PC-3 (cell line): ENCODE measurements at regions of chr21 and their contacts with region 1.

Region 1: GRCh38 chr21:46569081-46569480 is 35.8 kb downstream of the S100B start:
- DNase-seq: no peak
- ATAC-seq: no peak
- H3K4me3 ChIP-seq: no peak overlapping the region
- H3K27ac ChIP-seq: no peak overlapping the region
- H3K4me1 ChIP-seq: no peaks in the 10 kb centered on the region; the same call in 1 of the 2 replicates
- H3K27me3 ChIP-seq: no peaks in the 10 kb centered on the region
- CTCF ChIP-seq: no peak

Region 2: GRCh38 chr21:45236481-45236880 is 1332.6 kb before region 1 on chr21:
- CTCF ChIA-PET with region 1: no interaction called
- POLR2A ChIA-PET with region 1: no interaction called
- intact Hi-C with region 1: no loop called
- DNase-seq: peak; percentile 19
- ATAC-seq: peak; percentile 64
- H3K4me3 ChIP-seq: no peak overlapping the region
- H3K27ac ChIP-seq: no peak overlapping the region
- H3K4me1 ChIP-seq: no peaks in the 10 kb centered on the region
- H3K27me3 ChIP-seq: no peaks in the 10 kb centered on the region
- CTCF ChIP-seq: peak; percentile 22; the same call in 1 of the 2 replicates

Region 3: DNA sequence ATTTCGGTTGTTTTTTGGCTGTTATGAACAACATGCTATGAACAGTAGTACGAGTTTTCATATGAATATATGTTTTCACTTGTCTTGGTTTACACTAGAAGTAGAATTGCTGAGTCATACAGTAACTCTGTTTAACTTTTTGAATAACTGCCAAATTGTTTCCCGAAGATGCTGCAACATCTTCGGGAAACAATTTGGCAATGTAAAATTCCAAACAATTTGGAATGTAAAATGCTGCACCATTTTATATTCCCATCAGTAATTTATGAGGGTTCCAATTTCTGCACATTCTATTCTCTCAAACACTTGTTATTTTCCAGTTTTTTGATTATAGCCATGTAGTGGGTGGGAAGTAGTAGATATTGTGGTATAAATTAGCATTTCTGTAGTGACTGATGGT is 914.0 kb before region 1 on chr21:
- CTCF ChIA-PET with region 1: no interaction called
- POLR2A ChIA-PET with region 1: interaction called, 19 read pairs
- intact Hi-C with region 1: no loop called
- DNase-seq: peak; percentile 55
- ATAC-seq: no peak
- H3K4me3 ChIP-seq: no peak overlapping the region
- H3K27ac ChIP-seq: no peak overlapping the region
- H3K4me1 ChIP-seq: no peaks in the 10 kb centered on the region; the same call in 1 of the 2 replicates
- H3K27me3 ChIP-seq: no peaks in the 10 kb centered on the region
- CTCF ChIP-seq: no peak

Region 4: DNA sequence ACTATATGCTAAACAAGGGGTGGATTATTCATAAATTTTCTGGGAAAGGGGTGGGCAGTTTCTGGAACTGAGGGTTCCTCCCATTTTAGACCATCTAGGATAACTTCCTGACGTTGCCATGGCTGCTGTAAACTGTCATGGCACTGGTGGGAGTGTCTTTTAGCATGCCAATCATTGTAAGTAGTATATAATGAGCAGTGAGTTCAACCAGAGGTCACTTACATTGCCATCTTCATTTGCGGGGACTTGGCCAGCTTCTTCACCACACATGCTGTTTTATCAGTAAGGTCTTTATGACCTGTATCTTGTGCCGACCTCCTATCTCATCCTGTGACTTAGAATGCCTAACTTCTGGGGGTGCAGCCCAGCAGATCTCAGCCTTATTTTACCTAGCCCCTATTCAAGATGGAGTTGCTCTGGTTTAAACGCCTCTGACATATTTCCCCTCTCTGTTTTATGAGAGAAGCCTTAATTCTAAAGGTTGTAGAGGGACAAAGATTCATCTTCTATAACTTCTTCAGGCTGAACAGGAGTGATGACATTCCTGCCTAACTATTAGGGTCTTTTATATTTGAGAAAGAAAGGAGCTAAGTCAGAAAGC is 50.0 kb before region 1 on chr21:
- CTCF ChIA-PET with region 1: interaction called, 11 read pairs
- POLR2A ChIA-PET with region 1: no interaction called
- intact Hi-C with region 1: no loop called
- DNase-seq: no peak
- ATAC-seq: no peak
- H3K4me3 ChIP-seq: no peak overlapping the region
- H3K27ac ChIP-seq: no peak overlapping the region
- H3K4me1 ChIP-seq: no peaks in the 10 kb centered on the region
- H3K27me3 ChIP-seq: no peaks in the 10 kb centered on the region
- CTCF ChIP-seq: no peak